Adrenal gland (tissue), 19 donors: ENCODE measurements at regions of chr7 and their contacts with region 1.

Region 1: DNA sequence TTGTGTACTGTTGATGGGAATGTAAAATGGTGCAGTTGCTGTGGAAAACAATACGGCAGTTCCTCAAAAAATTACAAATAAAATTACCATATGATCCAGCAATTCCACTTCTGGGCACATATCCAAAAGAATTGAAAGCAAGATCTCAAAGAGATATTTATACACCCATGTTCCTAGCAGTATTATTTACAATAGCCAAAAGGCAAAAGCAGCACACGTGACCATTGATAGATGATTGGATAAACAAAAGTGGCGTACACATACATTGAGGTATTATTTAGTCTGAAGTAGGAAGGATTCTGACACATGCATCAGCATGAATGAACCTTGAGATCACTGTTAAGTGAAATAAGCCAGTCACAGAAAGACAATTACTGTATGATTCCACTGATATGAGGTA is 29.3 kb upstream of the NXPH1 start:
- DNase-seq: no peak
- H3K4me3 ChIP-seq: no peak overlapping the region
- H3K27ac ChIP-seq: no peak overlapping the region
- H3K4me1 ChIP-seq: no peaks in the 10 kb centered on the region
- H3K27me3 ChIP-seq: no peaks in the 10 kb centered on the region
- CTCF ChIP-seq: no peak
- POLR2A ChIP-seq: no peak

Region 2: GRCh38 chr7:7996576-7996975 is 407.5 kb before region 1 on chr7:
- intact Hi-C with region 1: no loop called
- DNase-seq: no peak
- H3K4me3 ChIP-seq: no peak overlapping the region
- H3K27ac ChIP-seq: no peak overlapping the region
- H3K4me1 ChIP-seq: no peaks in the 10 kb centered on the region
- H3K27me3 ChIP-seq: no peaks in the 10 kb centered on the region
- CTCF ChIP-seq: no peak
- POLR2A ChIP-seq: no peak

Region 3: GRCh38 chr7:10192074-10192473 is 1788.0 kb after region 1 on chr7:
- intact Hi-C with region 1: loop called in 1 of 2 experiments (anchors 10 kb)
- DNase-seq: no peak
- H3K4me3 ChIP-seq: no peak overlapping the region
- H3K27ac ChIP-seq: no peak overlapping the region
- H3K4me1 ChIP-seq: no peaks in the 10 kb centered on the region
- H3K27me3 ChIP-seq: no peaks in the 10 kb centered on the region
- CTCF ChIP-seq: no peak
- POLR2A ChIP-seq: no peak